Heart left ventricle (tissue), 16 donors: ENCODE measurements at regions of chr12 and their contacts with region 1.

Region 1: GRCh38 chr12:64181504-64182291 is 40.4 kb downstream of the KICS2 start:
- DNase-seq: peak in 4 of 5 donors; percentile 40 to 52 (median 48)
- ATAC-seq: peak; percentile 88 to 92 (median 88)
- H3K4me3 ChIP-seq: peak overlapping the region in 1 of 12 donors; percentile 8
- H3K27ac ChIP-seq: peak overlapping the region in 6 of 12 donors; percentile 0 to 77 (median 48)
- H3K4me1 ChIP-seq: peaks cover 0 to 37% (median 5%) of the 10 kb centered on the region in 12 donors
- H3K27me3 ChIP-seq: no peaks in the 10 kb centered on the region
- CTCF ChIP-seq: peak; percentile 46 to 76 (median 66)
- POLR2A ChIP-seq: no peak

Region 2: GRCh38 chr12:63978519-63978918 is 203.2 kb before region 1 on chr12:
- intact Hi-C with region 1: no loop called
- DNase-seq: no peak
- ATAC-seq: no peak
- H3K4me3 ChIP-seq: no peak overlapping the region
- H3K27ac ChIP-seq: no peak overlapping the region
- H3K4me1 ChIP-seq: peaks cover 0 to 12% (median 0%) of the 10 kb centered on the region in 12 donors
- H3K27me3 ChIP-seq: no peaks in the 10 kb centered on the region
- CTCF ChIP-seq: no peak
- POLR2A ChIP-seq: no peak

Region 3: DNA sequence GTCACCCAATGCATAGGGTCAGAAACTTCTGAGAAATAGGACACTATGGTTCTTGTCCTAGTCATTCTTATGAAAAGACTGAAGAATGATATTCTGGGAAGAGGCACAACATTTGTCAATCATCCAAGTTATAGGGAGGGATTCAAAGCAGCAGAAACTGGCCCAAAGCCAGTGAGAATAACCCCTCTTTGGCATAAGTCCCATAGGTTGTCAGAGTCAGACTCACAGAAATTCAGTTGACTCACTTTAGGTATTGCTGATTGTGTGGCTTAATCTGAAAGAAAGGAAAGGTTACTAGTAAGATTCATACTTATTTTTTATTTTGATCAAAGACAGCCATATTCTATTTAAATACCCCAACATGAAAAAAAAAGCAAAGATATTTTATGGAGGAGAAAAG is 186.2 kb before region 1 on chr12:
- intact Hi-C with region 1: no loop called
- DNase-seq: no peak
- ATAC-seq: no peak
- H3K4me3 ChIP-seq: no peak overlapping the region
- H3K27ac ChIP-seq: no peak overlapping the region
- H3K4me1 ChIP-seq: peaks cover 0 to 15% (median 0%) of the 10 kb centered on the region in 12 donors
- H3K27me3 ChIP-seq: no peaks in the 10 kb centered on the region
- CTCF ChIP-seq: no peak
- POLR2A ChIP-seq: no peak

Region 4: GRCh38 chr12:64099397-64099796 is 82.3 kb before region 1 on chr12:
- intact Hi-C with region 1: loop called in 1 of 10 experiments (anchors 5 kb)
- DNase-seq: peak in 4 of 5 donors; percentile 22 to 66 (median 45)
- ATAC-seq: peak; percentile 78 to 92 (median 83)
- H3K4me3 ChIP-seq: no peak overlapping the region
- H3K27ac ChIP-seq: peak overlapping the region in 4 of 12 donors; percentile 25 to 63 (median 48)
- H3K4me1 ChIP-seq: peaks cover 0 to 22% (median 9%) of the 10 kb centered on the region in 12 donors
- H3K27me3 ChIP-seq: no peaks in the 10 kb centered on the region
- CTCF ChIP-seq: no peak
- POLR2A ChIP-seq: no peak

Region 5: GRCh38 chr12:64110864-64111263 is 70.8 kb before region 1 on chr12:
- intact Hi-C with region 1: loop called in 1 of 10 experiments (anchors 10 kb)
- DNase-seq: no peak
- ATAC-seq: no peak
- H3K4me3 ChIP-seq: no peak overlapping the region
- H3K27ac ChIP-seq: no peak overlapping the region
- H3K4me1 ChIP-seq: no peaks in the 10 kb centered on the region
- H3K27me3 ChIP-seq: no peaks in the 10 kb centered on the region
- CTCF ChIP-seq: no peak
- POLR2A ChIP-seq: no peak

Region 6: GRCh38 chr12:64240781-64241180 is 59.1 kb after region 1 on chr12:
- intact Hi-C with region 1: loop called in 1 of 10 experiments (anchors 10 kb)
- DNase-seq: no peak
- ATAC-seq: no peak
- H3K4me3 ChIP-seq: no peak overlapping the region
- H3K27ac ChIP-seq: no peak overlapping the region
- H3K4me1 ChIP-seq: peaks cover 0 to 10% (median 0%) of the 10 kb centered on the region in 12 donors
- H3K27me3 ChIP-seq: no peaks in the 10 kb centered on the region
- CTCF ChIP-seq: no peak
- POLR2A ChIP-seq: no peak

Region 7: GRCh38 chr12:64633656-64634337 is 452.1 kb after region 1 on chr12:
- intact Hi-C with region 1: no loop called
- DNase-seq: peak in 3 of 5 donors; percentile 32 to 82 (median 62)
- ATAC-seq: peak; percentile 21 to 90 (median 70)
- H3K4me3 ChIP-seq: no peak overlapping the region
- H3K27ac ChIP-seq: peak overlapping the region in 2 of 12 donors; percentile 9 to 40
- H3K4me1 ChIP-seq: peaks cover 0 to 52% (median 23%) of the 10 kb centered on the region in 12 donors
- H3K27me3 ChIP-seq: no peaks in the 10 kb centered on the region
- CTCF ChIP-seq: no peak
- POLR2A ChIP-seq: no peak